ENCODE measurements at regions of chr18 and their contacts with region 1.

Region 1: GRCh38 chr18:2508678-2509077 is 62.6 kb downstream of the METTL4 start:
- DNase-seq: peak; percentile 66
- H3K4me3 ChIP-seq: no peak overlapping the region
- H3K27ac ChIP-seq: no peak overlapping the region
- H3K4me1 ChIP-seq: peaks cover 7% of the 10 kb centered on the region
- H3K27me3 ChIP-seq: no peaks in the 10 kb centered on the region
- CTCF ChIP-seq: no peak

Region 2: DNA sequence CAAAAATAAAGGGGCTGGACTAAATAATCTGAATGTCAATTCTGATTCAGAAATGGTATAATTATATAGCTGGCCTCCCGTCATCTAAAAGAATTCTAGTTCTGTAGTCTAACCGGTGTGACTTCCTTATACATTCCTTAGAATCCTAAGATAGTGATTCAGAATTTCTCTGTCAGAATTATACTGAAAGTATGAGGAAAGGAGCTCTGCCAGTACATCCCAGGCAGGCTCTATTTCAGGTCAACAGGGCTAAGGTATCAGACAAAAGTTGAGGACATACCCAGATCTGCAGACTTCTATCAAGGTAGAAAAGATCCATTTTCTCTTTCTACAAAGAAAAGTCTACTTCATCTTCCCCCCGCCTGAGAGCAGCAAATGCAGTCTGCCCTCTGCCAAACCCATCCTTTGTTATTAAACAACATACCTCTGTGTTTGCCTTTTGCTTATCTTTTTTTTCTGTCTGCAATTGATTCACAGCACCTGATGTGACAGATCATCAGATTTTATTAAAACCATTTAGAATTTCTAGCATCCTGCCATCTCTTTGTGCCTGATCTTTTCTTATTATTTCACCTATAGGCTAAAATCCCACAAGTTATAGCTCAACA is 65.8 kb before region 1 on chr18:
- CTCF ChIA-PET with region 1: no interaction called
- dilution Hi-C with region 1: no loop called
- in situ Hi-C with region 1: no loop called
- intact Hi-C with region 1: loop called (anchors 10 kb)
- DNase-seq: peak; percentile 35
- H3K4me3 ChIP-seq: no peak overlapping the region
- H3K27ac ChIP-seq: no peak overlapping the region
- H3K4me1 ChIP-seq: peaks cover 7% of the 10 kb centered on the region
- H3K27me3 ChIP-seq: no peaks in the 10 kb centered on the region
- CTCF ChIP-seq: no peak

Measured in mammary epithelial cell (primary cell).